Right lobe of liver (tissue), 6 donors: ENCODE measurements at regions of chr11 and their contacts with region 1.

Region 1: DNA sequence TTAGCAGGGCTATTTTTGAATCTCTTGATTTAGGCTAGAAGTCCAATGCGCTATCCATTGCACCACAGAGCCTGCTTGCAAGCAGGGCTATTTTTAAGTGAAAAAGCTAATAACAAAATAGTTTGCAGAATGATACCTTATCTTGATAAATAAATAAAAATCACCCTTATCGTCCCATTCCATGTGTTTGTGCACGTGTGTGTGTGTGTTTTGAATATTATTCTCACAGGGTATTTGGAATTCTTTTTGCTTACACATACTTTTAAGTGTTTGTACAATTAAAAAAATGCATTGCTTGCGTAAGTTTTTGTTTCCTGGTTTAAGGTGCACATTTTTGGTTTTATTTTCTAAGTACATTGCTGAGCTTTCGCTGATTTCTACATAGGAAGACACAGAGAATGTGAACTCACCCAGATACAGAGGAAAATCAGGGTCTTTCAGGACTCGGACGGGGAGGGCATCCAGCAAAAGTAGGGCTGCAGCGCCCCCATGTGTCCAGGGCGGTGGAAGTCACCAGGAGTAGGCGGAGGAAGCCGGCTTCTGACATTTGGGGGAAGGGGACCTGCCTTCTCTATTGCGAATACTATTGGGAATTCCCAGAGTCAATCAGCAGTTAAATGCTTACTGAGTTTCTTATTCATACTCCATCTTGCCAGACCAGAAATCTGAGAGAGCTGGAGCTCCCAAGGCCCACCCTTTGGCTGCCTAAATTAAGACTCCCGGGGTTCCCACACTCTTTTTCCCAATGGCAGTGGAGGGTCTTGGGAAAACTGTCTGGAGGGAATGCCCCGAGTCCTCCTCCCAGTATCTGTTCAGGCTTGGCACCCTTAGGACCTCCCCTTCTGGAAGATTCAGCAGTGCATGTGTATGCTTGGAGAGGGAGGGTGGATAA is 27.2 kb downstream of the SLC1A2 start:
- DNase-seq: peak; percentile 85 to 91 (median 87)
- ATAC-seq: peak; percentile 84 to 89 (median 85)
- H3K4me3 ChIP-seq: peak overlapping the region in 2 of 3 donors; percentile 9 to 23
- H3K27ac ChIP-seq: peak overlapping the region; percentile 83 to 96 (median 94)
- H3K4me1 ChIP-seq: peaks cover 0 to 18% (median 10%) of the 10 kb centered on the region in 4 donors
- H3K27me3 ChIP-seq: no peaks in the 10 kb centered on the region
- CTCF ChIP-seq: peak; percentile 87 to 96 (median 92)
- POLR2A ChIP-seq: no peak

Region 2: DNA sequence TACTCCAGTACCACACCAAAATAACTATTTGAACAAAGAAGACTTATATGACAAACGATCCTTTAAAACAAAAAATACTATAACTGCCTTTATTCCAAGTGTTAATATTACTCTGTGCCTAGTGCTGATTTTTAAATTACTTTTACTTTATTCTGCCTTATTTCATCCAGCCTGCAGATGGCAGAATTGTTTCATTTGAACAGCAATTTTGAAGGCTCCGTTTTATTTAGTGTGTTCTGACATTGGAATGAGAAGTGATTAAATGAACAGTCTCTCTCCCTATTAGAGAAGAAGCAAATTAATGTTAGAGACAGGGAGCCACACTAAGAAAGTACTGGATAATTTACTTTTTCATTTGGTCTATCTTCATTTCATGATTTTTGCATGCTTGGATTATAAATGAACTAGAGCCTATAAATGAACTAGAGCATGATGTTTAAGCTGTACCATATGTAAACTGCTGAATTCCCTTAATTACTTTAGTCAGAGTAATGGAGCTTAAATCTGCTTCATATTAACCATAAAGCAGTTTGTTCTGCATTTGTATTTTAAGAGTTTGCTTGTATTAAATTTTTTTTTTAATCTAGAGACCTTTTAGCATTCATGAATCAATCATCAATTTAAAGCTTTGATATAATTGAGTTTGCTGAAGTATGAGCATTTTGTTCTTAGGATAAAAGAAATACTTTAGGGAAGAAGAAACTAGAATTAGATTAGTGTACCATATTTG is 465.9 kb before region 1 on chr11:
- intact Hi-C with region 1: loop called in 1 of 2 experiments (anchors 10 kb)
- DNase-seq: no peak
- ATAC-seq: peak; percentile 66 to 80 (median 76)
- H3K4me3 ChIP-seq: no peak overlapping the region
- H3K27ac ChIP-seq: no peak overlapping the region
- H3K4me1 ChIP-seq: peaks cover 0 to 52% (median 8%) of the 10 kb centered on the region in 4 donors
- H3K27me3 ChIP-seq: no peaks in the 10 kb centered on the region
- CTCF ChIP-seq: peak; percentile 62 to 83 (median 74)
- POLR2A ChIP-seq: no peak

Region 3: GRCh38 chr11:35223371-35223796 is 168.8 kb before region 1 on chr11:
- intact Hi-C with region 1: no loop called
- DNase-seq: no peak
- ATAC-seq: no peak
- H3K4me3 ChIP-seq: no peak overlapping the region
- H3K27ac ChIP-seq: no peak overlapping the region
- H3K4me1 ChIP-seq: no peaks in the 10 kb centered on the region
- H3K27me3 ChIP-seq: no peaks in the 10 kb centered on the region
- CTCF ChIP-seq: no peak
- POLR2A ChIP-seq: no peak

Region 4: DNA sequence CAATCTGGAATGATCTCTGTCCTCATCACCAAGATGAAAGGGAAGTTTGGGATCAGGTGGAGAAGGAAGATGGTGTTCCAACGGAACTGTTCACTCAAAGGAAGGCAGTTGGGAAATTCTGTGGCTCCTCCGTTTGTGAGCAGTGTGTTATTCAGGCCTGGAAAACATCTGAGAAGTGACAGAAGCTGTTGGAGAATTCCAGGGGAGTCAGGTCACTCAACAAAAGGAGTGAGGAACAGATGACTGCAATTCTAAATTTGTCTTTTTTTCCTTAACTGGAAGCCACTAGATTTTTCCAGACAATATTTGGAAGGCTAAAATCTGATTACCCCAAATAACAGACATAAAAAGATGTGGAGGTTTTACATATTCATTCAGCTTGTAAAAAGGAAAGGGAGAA is 145.4 kb before region 1 on chr11:
- intact Hi-C with region 1: loop called in 1 of 2 experiments (anchors 10 kb)
- DNase-seq: no peak
- ATAC-seq: peak in 1 of 4 donors; percentile 22
- H3K4me3 ChIP-seq: no peak overlapping the region
- H3K27ac ChIP-seq: no peak overlapping the region
- H3K4me1 ChIP-seq: no peaks in the 10 kb centered on the region
- H3K27me3 ChIP-seq: no peaks in the 10 kb centered on the region
- CTCF ChIP-seq: no peak
- POLR2A ChIP-seq: no peak